ENCODE measurements at regions of chr17 and their contacts with region 1.

Region 1: GRCh38 chr17:72725433-72726068 is 366.9 kb downstream of the SLC39A11 start:
- DNase-seq: peak; percentile 53
- H3K4me3 ChIP-seq: no peak overlapping the region
- H3K27ac ChIP-seq: no peak overlapping the region
- H3K4me1 ChIP-seq: peaks cover 4% of the 10 kb centered on the region
- H3K27me3 ChIP-seq: no peaks in the 10 kb centered on the region
- CTCF ChIP-seq: peak; percentile 83 to 93
- POLR2A ChIP-seq: no peak

Region 2: DNA sequence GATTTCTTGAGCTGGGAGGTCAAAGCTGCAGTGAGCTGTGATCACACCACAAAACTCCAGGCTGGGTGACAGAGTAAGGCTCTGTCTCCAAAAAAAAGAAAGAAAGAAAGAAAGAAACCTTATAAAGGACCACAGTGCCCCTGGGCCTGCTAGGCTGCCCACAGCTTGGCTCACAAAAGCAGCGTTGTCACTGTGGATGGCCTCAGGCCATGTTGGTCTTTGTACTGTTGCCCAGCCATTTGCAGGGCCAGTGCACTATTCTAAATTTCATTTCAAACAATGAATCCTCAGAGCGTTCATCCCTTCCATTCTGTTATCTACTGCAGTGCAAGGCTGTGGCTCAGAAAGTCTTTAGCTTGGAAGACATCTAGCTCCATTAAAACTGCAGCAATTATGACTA is 158.5 kb after region 1 on chr17:
- CTCF ChIA-PET with region 1: no interaction called
- POLR2A ChIA-PET with region 1: no interaction called
- dilution Hi-C with region 1: no loop called
- intact Hi-C with region 1: no loop called
- DNase-seq: no peak
- H3K4me3 ChIP-seq: no peak overlapping the region
- H3K27ac ChIP-seq: no peak overlapping the region
- H3K4me1 ChIP-seq: no peaks in the 10 kb centered on the region
- H3K27me3 ChIP-seq: no peaks in the 10 kb centered on the region
- CTCF ChIP-seq: no peak
- POLR2A ChIP-seq: no peak

Region 3: GRCh38 chr17:73092523-73093135 is 367.1 kb after region 1 on chr17 and contains the start of gene SLC39A11:
- CTCF ChIA-PET with region 1: interaction called, 6 read pairs
- POLR2A ChIA-PET with region 1: no interaction called
- dilution Hi-C with region 1: no loop called
- intact Hi-C with region 1: loop called (anchors 5 kb)
- DNase-seq: peak; percentile 92
- H3K4me3 ChIP-seq: peak within 1 kb of the TSS; percentile 47 to 83 (median 61)
- H3K27ac ChIP-seq: no peak within 1 kb of the TSS
- H3K4me1 ChIP-seq: peaks cover 9% of the 10 kb centered on the region
- H3K27me3 ChIP-seq: no peaks in the 10 kb centered on the region
- CTCF ChIP-seq: no peak
- POLR2A ChIP-seq: peak; percentile 73
- total RNA-seq, gene SLC39A11: 11.9 and 12.4 TPM in 2 replicates

Region 4: GRCh38 chr17:73192894-73193701 is 467.5 kb after region 1 on chr17 and contains the start of gene COG1:
- CTCF ChIA-PET with region 1: interaction called, 236 read pairs
- POLR2A ChIA-PET with region 1: no interaction called
- dilution Hi-C with region 1: no loop called
- intact Hi-C with region 1: loop called (anchors 1 kb)
- DNase-seq: peak; percentile 86
- H3K4me3 ChIP-seq: peak within 1 kb of the TSS; percentile 78 to 94 (median 78)
- H3K27ac ChIP-seq: peak within 1 kb of the TSS; percentile 56
- H3K4me1 ChIP-seq: peaks cover 14% of the 10 kb centered on the region
- H3K27me3 ChIP-seq: no peaks in the 10 kb centered on the region
- CTCF ChIP-seq: no peak
- POLR2A ChIP-seq: peak; percentile 77
- total RNA-seq, gene COG1: 38.6 and 39.0 TPM in 2 replicates

Region 5: DNA sequence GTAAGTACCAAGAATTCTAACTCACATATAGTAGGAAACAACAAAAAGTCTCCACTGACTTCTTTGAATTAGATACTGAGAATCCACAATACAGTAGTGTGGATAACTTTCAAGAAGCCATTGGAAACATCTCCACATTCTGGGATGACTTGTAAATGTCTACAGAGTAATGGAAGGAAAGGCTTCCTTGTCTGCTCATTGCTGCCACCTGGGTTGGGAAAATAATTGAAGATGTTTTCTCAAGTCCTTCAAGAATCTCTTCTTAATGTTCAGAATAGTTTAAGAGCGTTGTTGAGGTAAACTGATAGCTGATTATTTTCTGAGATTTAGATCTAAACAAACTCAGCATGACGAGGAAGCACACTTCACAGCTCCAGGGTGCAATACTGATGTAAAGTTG is 522.2 kb after region 1 on chr17:
- CTCF ChIA-PET with region 1: interaction called, 73 read pairs
- POLR2A ChIA-PET with region 1: no interaction called
- dilution Hi-C with region 1: no loop called
- intact Hi-C with region 1: loop called (anchors 1 kb)
- DNase-seq: peak; percentile 29
- H3K4me3 ChIP-seq: no peak overlapping the region
- H3K27ac ChIP-seq: no peak overlapping the region
- H3K4me1 ChIP-seq: no peaks in the 10 kb centered on the region
- H3K27me3 ChIP-seq: no peaks in the 10 kb centered on the region
- CTCF ChIP-seq: no peak
- POLR2A ChIP-seq: no peak

Region 6: GRCh38 chr17:73371285-73371684 is 645.7 kb after region 1 on chr17:
- CTCF ChIA-PET with region 1: interaction called, 121 read pairs
- POLR2A ChIA-PET with region 1: interaction called, 10 read pairs
- dilution Hi-C with region 1: no loop called
- intact Hi-C with region 1: loop called (anchors 1 kb)
- DNase-seq: no peak
- H3K4me3 ChIP-seq: no peak overlapping the region
- H3K27ac ChIP-seq: no peak overlapping the region
- H3K4me1 ChIP-seq: no peaks in the 10 kb centered on the region
- H3K27me3 ChIP-seq: peaks cover 0 to 3% of the 10 kb centered on the region in 2 experiments
- CTCF ChIP-seq: no peak
- POLR2A ChIP-seq: no peak

Measured in endothelial cell of umbilical vein (primary cell).